HEK293 (cell line): ENCODE measurements at regions of chr2 and their contacts with region 1.

Region 1: GRCh38 chr2:127415593-127416505 is 2.4 kb upstream of the PROC start:
- H3K4me3 ChIP-seq: peak overlapping the region; percentile 28
- H3K27ac ChIP-seq: peak overlapping the region; percentile 13; the same call in 1 of the 2 replicates
- H3K4me1 ChIP-seq: peaks cover 5% of the 10 kb centered on the region
- CTCF ChIP-seq: peak; percentile 90

Region 2: GRCh38 chr2:127324635-127325034 is 91.2 kb before region 1 on chr2:
- CTCF ChIA-PET with region 1: interaction called, 16 read pairs
- POLR2A ChIA-PET with region 1: no interaction called
- H3K4me3 ChIP-seq: no peak overlapping the region
- H3K27ac ChIP-seq: no peak overlapping the region
- H3K4me1 ChIP-seq: no peaks in the 10 kb centered on the region
- CTCF ChIP-seq: no peak

Region 3: GRCh38 chr2:127330753-127331152 is 85.1 kb before region 1 on chr2:
- CTCF ChIA-PET with region 1: interaction called, 10 read pairs
- POLR2A ChIA-PET with region 1: interaction called, 5 read pairs
- H3K4me3 ChIP-seq: no peak overlapping the region
- H3K27ac ChIP-seq: no peak overlapping the region
- H3K4me1 ChIP-seq: no peaks in the 10 kb centered on the region
- CTCF ChIP-seq: no peak

Region 4: GRCh38 chr2:127386764-127387654 is 28.8 kb before region 1 on chr2:
- CTCF ChIA-PET with region 1: interaction called, 11 read pairs
- POLR2A ChIA-PET with region 1: no interaction called
- H3K4me3 ChIP-seq: peak overlapping the region; percentile 92
- H3K27ac ChIP-seq: peak overlapping the region; percentile 99
- H3K4me1 ChIP-seq: peaks cover 19% of the 10 kb centered on the region
- CTCF ChIP-seq: no peak

Region 5: DNA sequence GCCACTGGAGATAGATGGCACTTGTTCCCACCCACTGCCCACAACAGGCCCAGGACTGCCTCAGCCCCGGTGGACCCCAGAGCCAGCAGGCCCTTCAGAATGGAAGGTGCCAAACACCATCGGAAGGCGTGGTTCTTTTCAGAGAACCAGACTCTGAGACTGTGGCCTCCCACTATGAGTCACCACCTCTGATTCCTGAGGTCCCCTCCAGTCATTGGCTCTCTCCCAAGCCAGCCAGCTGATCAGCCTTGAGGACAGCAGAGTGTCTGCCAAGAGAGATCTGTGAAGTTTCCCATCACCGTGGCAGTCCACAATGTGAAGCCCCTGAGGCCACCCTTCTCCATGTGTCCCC is 17.6 kb before region 1 on chr2:
- CTCF ChIA-PET with region 1: interaction called, 18 read pairs
- POLR2A ChIA-PET with region 1: interaction called, 5 read pairs
- H3K4me3 ChIP-seq: no peak overlapping the region
- H3K27ac ChIP-seq: peak overlapping the region; percentile 50; the same call in 1 of the 2 replicates
- H3K4me1 ChIP-seq: peaks cover 5% of the 10 kb centered on the region
- CTCF ChIP-seq: no peak